CD8-positive, alpha-beta T cell (primary cell): ENCODE measurements at regions of chr4 and their contacts with region 1.

Region 1: GRCh38 chr4:78136109-78137081 is 79.3 kb downstream of the FRAS1 start:
- DNase-seq: no peak
- ATAC-seq: no peak
- H3K4me3 ChIP-seq: no peak overlapping the region
- H3K4me3 Mint-ChIP-seq: no peak overlapping the region
- H3K27ac ChIP-seq: no peak overlapping the region
- H3K27ac Mint-ChIP-seq: no peak overlapping the region
- H3K4me1 ChIP-seq: no peaks in the 10 kb centered on the region
- H3K4me1 Mint-ChIP-seq: no peaks in the 10 kb centered on the region
- H3K27me3 ChIP-seq: peaks cover 0 to 3% of the 10 kb centered on the region in 2 experiments
- H3K27me3 Mint-ChIP-seq: peaks cover 12% of the 10 kb centered on the region
- CTCF ChIP-seq: no peak

Region 2: DNA sequence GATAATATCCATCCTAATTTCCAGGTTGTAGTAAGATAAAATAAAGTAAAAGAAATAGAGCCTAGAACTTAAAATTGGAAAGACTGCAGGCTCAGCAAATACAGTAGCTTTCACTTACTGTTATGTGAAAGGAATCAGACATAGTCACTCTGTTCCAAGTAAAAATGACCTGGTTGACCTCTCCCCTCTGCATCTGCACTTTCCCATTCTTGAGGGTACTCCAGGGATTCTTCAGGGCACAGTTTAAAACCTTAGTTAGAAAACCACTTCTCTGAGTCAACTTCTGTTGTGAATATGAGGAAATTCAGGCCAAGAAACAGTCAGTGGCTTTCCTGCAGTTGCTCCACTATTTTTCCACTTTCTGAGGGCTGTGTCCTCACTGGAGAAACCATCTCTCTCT is 36.3 kb before region 1 on chr4:
- CTCF ChIA-PET with region 1: no interaction called
- POLR2A ChIA-PET with region 1: no interaction called
- intact Hi-C with region 1: loop called in 1 of 2 experiments (anchors 2 kb)
- DNase-seq: no peak
- ATAC-seq: no peak
- H3K4me3 ChIP-seq: no peak overlapping the region
- H3K4me3 Mint-ChIP-seq: no peak overlapping the region
- H3K27ac ChIP-seq: no peak overlapping the region
- H3K27ac Mint-ChIP-seq: no peak overlapping the region
- H3K4me1 ChIP-seq: no peaks in the 10 kb centered on the region
- H3K4me1 Mint-ChIP-seq: no peaks in the 10 kb centered on the region
- H3K27me3 ChIP-seq: no peaks in the 10 kb centered on the region
- H3K27me3 Mint-ChIP-seq: no peaks in the 10 kb centered on the region
- CTCF ChIP-seq: no peak

Region 3: DNA sequence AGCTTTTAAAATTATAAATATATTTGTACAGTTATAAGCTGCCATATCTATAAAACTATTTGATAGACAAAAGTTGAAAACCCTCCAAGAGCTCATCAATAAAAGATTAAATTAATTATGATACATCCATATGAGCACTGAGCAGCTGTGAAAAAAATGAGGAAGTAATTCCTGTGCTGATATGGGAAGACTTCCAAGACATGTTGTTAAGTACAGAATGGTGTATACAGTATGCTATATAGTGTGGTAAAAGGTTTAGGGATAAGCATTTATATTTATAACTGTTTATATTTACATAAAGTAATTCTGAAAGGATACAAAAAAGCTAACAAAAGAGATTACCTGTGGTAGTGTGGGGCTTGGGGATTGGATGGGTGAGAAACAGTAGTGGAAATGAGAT is 547.0 kb after region 1 on chr4:
- CTCF ChIA-PET with region 1: no interaction called
- POLR2A ChIA-PET with region 1: no interaction called
- intact Hi-C with region 1: no loop called
- DNase-seq: no peak
- ATAC-seq: no peak
- H3K4me3 ChIP-seq: no peak overlapping the region
- H3K4me3 Mint-ChIP-seq: no peak overlapping the region
- H3K27ac ChIP-seq: no peak overlapping the region
- H3K27ac Mint-ChIP-seq: no peak overlapping the region
- H3K4me1 ChIP-seq: no peaks in the 10 kb centered on the region
- H3K4me1 Mint-ChIP-seq: no peaks in the 10 kb centered on the region
- H3K27me3 ChIP-seq: no peaks in the 10 kb centered on the region
- H3K27me3 Mint-ChIP-seq: no peaks in the 10 kb centered on the region
- CTCF ChIP-seq: no peak